SK-N-SH (cell line): ENCODE measurements at regions of chr14 and their contacts with region 1.

Region 1: GRCh38 chr14:76509311-76509710 is 133.4 kb downstream of the ESRRB start:
- DNase-seq: no peak
- H3K4me3 ChIP-seq: no peak overlapping the region
- H3K27ac ChIP-seq: no peak overlapping the region
- H3K4me1 ChIP-seq: peaks cover 0 to 10% of the 10 kb centered on the region in 2 experiments; a peak in 1 of 4 replicates
- H3K27me3 ChIP-seq: no peaks in the 10 kb centered on the region
- CTCF ChIP-seq: no peak
- EP300 ChIP-seq: no peak
- RAD21 ChIP-seq: peak; percentile 12; the same call in 1 of the 2 replicates

Region 2: DNA sequence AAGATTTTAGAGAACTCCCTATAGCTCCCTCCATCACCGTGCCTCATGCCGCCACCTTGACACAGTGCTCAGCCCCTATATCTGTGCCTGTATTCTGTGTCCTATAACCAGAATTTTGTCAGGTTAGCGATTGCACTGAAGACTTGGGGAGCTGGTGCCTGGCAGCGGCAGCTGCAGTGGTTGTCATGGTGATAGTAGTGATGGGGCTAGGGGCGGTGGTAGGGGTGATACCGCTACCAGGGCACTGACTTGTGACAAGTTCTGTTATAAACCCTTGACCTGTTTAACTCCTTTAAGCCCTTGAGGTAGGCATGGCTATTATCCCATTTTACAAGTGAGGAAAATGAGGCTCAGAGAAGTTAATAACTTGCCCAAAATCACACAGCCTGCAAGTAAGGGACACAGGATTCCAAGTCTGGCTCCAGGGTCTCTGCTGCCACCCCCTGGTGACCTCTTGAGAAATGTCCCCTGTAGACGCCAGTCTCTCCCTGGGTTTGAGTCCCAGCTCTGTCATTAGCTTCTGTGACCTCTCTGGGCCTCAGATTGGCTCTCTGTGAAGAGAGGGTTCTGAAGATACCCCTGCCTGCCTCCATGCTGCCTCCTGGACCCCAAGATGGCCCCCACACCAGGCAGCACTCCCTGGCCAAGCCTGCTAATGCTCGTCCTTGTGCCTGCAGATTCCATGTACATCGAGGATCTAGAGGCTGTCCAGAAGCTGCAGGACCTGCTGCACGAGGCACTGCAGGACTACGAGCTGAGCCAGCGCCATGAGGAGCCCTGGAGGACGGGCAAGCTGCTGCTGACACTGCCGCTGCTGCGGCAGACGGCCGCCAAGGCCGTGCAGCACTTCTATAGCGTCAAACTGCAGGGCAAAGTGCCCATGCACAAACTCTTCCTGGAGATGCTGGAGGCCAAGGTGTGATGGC is 11.5 kb before region 1 on chr14:
- CTCF ChIA-PET with region 1: interaction called, 11 read pairs
- POLR2A ChIA-PET with region 1: interaction called, 3 read pairs
- DNase-seq: peak; percentile 76
- H3K4me3 ChIP-seq: no peak overlapping the region; a peak in 1 of 4 replicates
- H3K27ac ChIP-seq: no peak overlapping the region
- H3K4me1 ChIP-seq: peaks cover 5 to 22% of the 10 kb centered on the region in 2 experiments; a peak in 2 of 4 replicates
- H3K27me3 ChIP-seq: no peaks in the 10 kb centered on the region
- CTCF ChIP-seq: no peak
- EP300 ChIP-seq: no peak
- RAD21 ChIP-seq: peak; percentile 73